GM12878 (cell line): ENCODE measurements at regions of chr2 and their contacts with region 1.

Region 1: GRCh38 chr2:64609227-64609941 is 44.3 kb downstream of the SERTAD2 start:
- DNase-seq: no peak
- ATAC-seq: peak; percentile 62
- H3K4me3 ChIP-seq: peak overlapping the region; percentile 68
- H3K27ac ChIP-seq: peak overlapping the region; percentile 14; the same call in 1 of the 2 replicates
- H3K4me1 ChIP-seq: peaks cover 38% of the 10 kb centered on the region
- H3K27me3 ChIP-seq: no peaks in the 10 kb centered on the region
- CTCF ChIP-seq: peak; percentile 30 to 63 (median 33); a peak in 4 of 6 replicates
- EP300 ChIP-seq: no peak
- POLR2A ChIP-seq: peak; percentile 70
- RAD21 ChIP-seq: peak; percentile 42

Region 2: GRCh38 chr2:64101141-64101591 is 508.2 kb before region 1 on chr2:
- CTCF ChIA-PET with region 1: no interaction called
- POLR2A ChIA-PET with region 1: no interaction called
- RAD21 ChIA-PET with region 1: no interaction called
- SMC1A ChIA-PET with region 1: no interaction called
- in situ Hi-C with region 1: no loop called
- intact Hi-C with region 1: no loop called
- DNase-seq: no peak
- ATAC-seq: peak; percentile 68
- H3K4me3 ChIP-seq: peak overlapping the region; percentile 26; the same call in 1 of the 2 replicates
- H3K27ac ChIP-seq: peak overlapping the region; percentile 80
- H3K4me1 ChIP-seq: peaks cover 46% of the 10 kb centered on the region
- H3K27me3 ChIP-seq: no peaks in the 10 kb centered on the region
- CTCF ChIP-seq: no peak
- EP300 ChIP-seq: no peak
- POLR2A ChIP-seq: no peak
- RAD21 ChIP-seq: no peak

Region 3: GRCh38 chr2:64595397-64596160 is 13.8 kb before region 1 on chr2:
- CTCF ChIA-PET with region 1: interaction called, 14 read pairs
- POLR2A ChIA-PET with region 1: interaction called, 14 read pairs
- RAD21 ChIA-PET with region 1: interaction called, 34 read pairs
- SMC1A ChIA-PET with region 1: interaction called, 46 read pairs
- in situ Hi-C with region 1: no loop called
- intact Hi-C with region 1: no loop called
- DNase-seq: no peak
- ATAC-seq: no peak
- H3K4me3 ChIP-seq: no peak overlapping the region
- H3K27ac ChIP-seq: no peak overlapping the region
- H3K4me1 ChIP-seq: peaks cover 6% of the 10 kb centered on the region; the same call in 1 of the 2 replicates
- H3K27me3 ChIP-seq: no peaks in the 10 kb centered on the region
- CTCF ChIP-seq: peak in 1 of 3 experiments; percentile 34; a peak in 2 of 6 replicates
- EP300 ChIP-seq: no peak
- POLR2A ChIP-seq: no peak
- RAD21 ChIP-seq: no peak; the same call in 1 of the 2 replicates

Region 4: DNA sequence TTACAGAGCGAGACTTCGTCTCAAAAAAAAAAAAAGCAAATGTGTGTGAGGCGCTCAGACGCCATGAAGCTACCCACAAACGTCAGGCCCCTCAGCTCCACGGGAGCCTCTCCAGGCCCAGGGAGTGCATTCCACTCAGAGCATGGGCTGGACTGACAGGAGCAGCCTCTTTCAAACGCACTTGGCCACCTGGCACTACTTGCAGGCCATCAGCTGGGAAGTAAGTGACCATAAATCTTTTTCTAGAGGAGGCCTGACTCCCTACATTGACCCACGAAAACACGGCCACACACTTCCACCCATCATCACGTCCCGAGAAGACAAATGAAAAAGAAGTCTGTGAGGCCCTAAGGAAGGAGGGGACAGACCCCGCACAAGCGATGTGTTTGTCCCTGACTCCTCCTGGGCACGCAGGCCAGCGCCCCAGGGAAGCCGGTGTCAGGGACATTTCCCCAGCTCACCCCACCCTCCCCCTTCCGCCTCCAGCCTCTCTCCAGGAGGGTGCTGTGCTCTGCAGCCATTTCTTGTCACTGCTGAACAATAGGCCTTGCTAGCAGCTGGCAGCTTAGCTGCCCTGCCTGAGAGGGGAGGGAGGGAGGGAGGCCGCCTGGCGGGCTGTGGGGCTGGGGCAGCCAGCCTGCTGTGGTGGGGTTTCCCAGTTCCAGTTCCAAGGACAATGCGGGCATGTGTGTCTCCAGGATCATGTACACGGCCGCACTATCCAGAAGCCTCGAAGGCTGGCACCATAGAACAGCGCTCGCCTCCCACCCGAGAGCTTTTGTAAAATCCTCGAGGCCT is 17.8 kb after region 1 on chr2:
- CTCF ChIA-PET with region 1: interaction called, 18 read pairs
- POLR2A ChIA-PET with region 1: interaction called, 4 read pairs
- RAD21 ChIA-PET with region 1: interaction called, 14 read pairs
- SMC1A ChIA-PET with region 1: interaction called, 7 read pairs
- in situ Hi-C with region 1: no loop called
- intact Hi-C with region 1: no loop called
- DNase-seq: no peak
- ATAC-seq: no peak
- H3K4me3 ChIP-seq: no peak overlapping the region
- H3K27ac ChIP-seq: no peak overlapping the region
- H3K4me1 ChIP-seq: peaks cover 8% of the 10 kb centered on the region
- H3K27me3 ChIP-seq: no peaks in the 10 kb centered on the region
- CTCF ChIP-seq: no peak
- EP300 ChIP-seq: no peak
- POLR2A ChIP-seq: no peak
- RAD21 ChIP-seq: no peak

Region 5: GRCh38 chr2:64635976-64636911 is 26.9 kb after region 1 on chr2:
- CTCF ChIA-PET with region 1: interaction called, 27 read pairs
- POLR2A ChIA-PET with region 1: interaction called, 10 read pairs
- RAD21 ChIA-PET with region 1: interaction called, 21 read pairs
- SMC1A ChIA-PET with region 1: interaction called, 18 read pairs
- in situ Hi-C with region 1: no loop called
- intact Hi-C with region 1: no loop called
- DNase-seq: peak; percentile 71
- ATAC-seq: peak; percentile 79
- H3K4me3 ChIP-seq: peak overlapping the region; percentile 56; the same call in 1 of the 2 replicates
- H3K27ac ChIP-seq: peak overlapping the region; percentile 95
- H3K4me1 ChIP-seq: peaks cover 58% of the 10 kb centered on the region
- H3K27me3 ChIP-seq: no peaks in the 10 kb centered on the region
- CTCF ChIP-seq: no peak
- EP300 ChIP-seq: peak; percentile 23 to 31; a peak in 1 of 4 replicates
- POLR2A ChIP-seq: peak; percentile 52
- RAD21 ChIP-seq: 0 out of 2 replicates have a peak, but pooled peaks have one; percentile 5

Region 6: GRCh38 chr2:64831134-64831976 is 222.0 kb after region 1 on chr2:
- CTCF ChIA-PET with region 1: interaction called, 21 read pairs
- POLR2A ChIA-PET with region 1: interaction called, 4 read pairs
- RAD21 ChIA-PET with region 1: interaction called, 11 read pairs
- SMC1A ChIA-PET with region 1: interaction called, 6 read pairs
- in situ Hi-C with region 1: no loop called
- intact Hi-C with region 1: no loop called
- DNase-seq: peak; percentile 71
- ATAC-seq: peak; percentile 96
- H3K4me3 ChIP-seq: peak overlapping the region; percentile 19; the same call in 1 of the 2 replicates
- H3K27ac ChIP-seq: peak overlapping the region; percentile 80
- H3K4me1 ChIP-seq: peaks cover 12% of the 10 kb centered on the region
- H3K27me3 ChIP-seq: no peaks in the 10 kb centered on the region
- CTCF ChIP-seq: peak; percentile 80 to 99 (median 98)
- EP300 ChIP-seq: 0 out of 4 replicates have a peak, but pooled peaks of 1 of the 2 experiments have one; percentile 10
- POLR2A ChIP-seq: no peak; the same call in none of the 2 replicates
- RAD21 ChIP-seq: peak; percentile 85

Region 7: GRCh38 chr2:64859312-64860212 is 250.2 kb after region 1 on chr2:
- CTCF ChIA-PET with region 1: interaction called, 7 read pairs
- POLR2A ChIA-PET with region 1: no interaction called
- RAD21 ChIA-PET with region 1: interaction called, 27 read pairs
- SMC1A ChIA-PET with region 1: interaction called, 9 read pairs
- in situ Hi-C with region 1: no loop called
- intact Hi-C with region 1: loop called (anchors 5 kb)
- DNase-seq: no peak
- ATAC-seq: peak; percentile 53
- H3K4me3 ChIP-seq: peak overlapping the region; percentile 65
- H3K27ac ChIP-seq: peak overlapping the region; percentile 91
- H3K4me1 ChIP-seq: peaks cover 54% of the 10 kb centered on the region
- H3K27me3 ChIP-seq: no peaks in the 10 kb centered on the region
- CTCF ChIP-seq: no peak
- EP300 ChIP-seq: no peak
- POLR2A ChIP-seq: peak; percentile 40
- RAD21 ChIP-seq: no peak

Region 8: GRCh38 chr2:64865073-64865830 is 255.9 kb after region 1 on chr2:
- CTCF ChIA-PET with region 1: interaction called, 9 read pairs
- POLR2A ChIA-PET with region 1: no interaction called
- RAD21 ChIA-PET with region 1: interaction called, 27 read pairs
- SMC1A ChIA-PET with region 1: interaction called, 9 read pairs
- in situ Hi-C with region 1: no loop called
- intact Hi-C with region 1: loop called (anchors 5 kb)
- DNase-seq: no peak
- ATAC-seq: peak; percentile 84
- H3K4me3 ChIP-seq: peak overlapping the region; percentile 82
- H3K27ac ChIP-seq: peak overlapping the region; percentile 70
- H3K4me1 ChIP-seq: peaks cover 49% of the 10 kb centered on the region
- H3K27me3 ChIP-seq: no peaks in the 10 kb centered on the region
- CTCF ChIP-seq: peak; percentile 62 to 79 (median 64); a peak in 5 of 6 replicates
- EP300 ChIP-seq: no peak
- POLR2A ChIP-seq: no peak
- RAD21 ChIP-seq: peak; percentile 71